ENCODE measurements at regions of chr15 and their contacts with region 1.

Region 1: DNA sequence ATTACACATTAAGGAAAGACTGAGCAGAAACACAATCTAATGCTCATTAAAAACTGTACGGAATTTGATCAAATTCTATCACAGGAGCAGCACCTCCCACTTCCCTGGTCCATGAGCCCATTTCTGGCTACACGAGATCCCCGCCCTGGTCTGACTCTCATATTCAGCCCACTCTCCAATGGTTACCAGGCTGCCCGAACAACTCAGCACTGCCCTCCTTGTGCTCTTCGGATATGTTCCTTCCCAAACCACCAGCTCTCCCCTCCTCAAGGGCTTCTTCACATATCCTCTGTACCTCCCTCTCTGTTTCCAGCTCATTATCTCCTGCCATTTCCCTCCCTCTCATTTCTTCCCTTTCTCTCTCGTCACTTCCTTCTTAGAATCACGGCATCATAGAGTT is 180.5 kb downstream of the RSL24D1 start:
- DNase-seq: no peak
- ATAC-seq: no peak
- H3K4me3 ChIP-seq: no peak overlapping the region
- H3K27ac ChIP-seq: no peak overlapping the region
- H3K4me1 ChIP-seq: no peaks in the 10 kb centered on the region
- H3K27me3 ChIP-seq: no peaks in the 10 kb centered on the region
- CTCF ChIP-seq: no peak
- POLR2A ChIP-seq: no peak

Region 2: DNA sequence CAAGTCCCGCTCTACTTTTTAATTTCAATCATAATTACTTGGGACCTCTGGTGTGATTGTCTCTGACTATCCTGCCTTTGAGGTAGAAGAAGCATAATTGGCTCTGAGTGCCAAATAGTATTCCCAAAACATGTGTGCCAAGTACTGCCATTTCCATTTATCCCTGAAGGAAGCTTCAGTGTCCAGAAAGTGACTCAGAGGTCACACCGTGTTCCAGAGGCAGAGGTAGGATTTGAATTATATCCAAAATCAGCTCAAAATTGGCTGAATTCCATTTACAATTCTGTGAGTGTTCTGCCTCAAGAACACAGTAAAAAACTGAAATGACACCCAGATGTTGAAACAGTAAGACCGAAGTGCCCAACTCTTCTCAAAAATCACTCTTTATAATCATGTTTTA is 74.8 kb before region 1 on chr15:
- intact Hi-C with region 1: no loop called
- DNase-seq: no peak
- ATAC-seq: no peak
- H3K4me3 ChIP-seq: no peak overlapping the region
- H3K27ac ChIP-seq: no peak overlapping the region
- H3K4me1 ChIP-seq: no peaks in the 10 kb centered on the region
- H3K27me3 ChIP-seq: no peaks in the 10 kb centered on the region
- CTCF ChIP-seq: no peak
- POLR2A ChIP-seq: no peak

Region 3: GRCh38 chr15:54960266-54960665 is 56.0 kb before region 1 on chr15:
- intact Hi-C with region 1: loop called (anchors 10 kb)
- DNase-seq: no peak
- ATAC-seq: no peak
- H3K4me3 ChIP-seq: no peak overlapping the region
- H3K27ac ChIP-seq: no peak overlapping the region
- H3K4me1 ChIP-seq: no peaks in the 10 kb centered on the region
- H3K27me3 ChIP-seq: no peaks in the 10 kb centered on the region
- CTCF ChIP-seq: no peak
- POLR2A ChIP-seq: no peak

Region 4: DNA sequence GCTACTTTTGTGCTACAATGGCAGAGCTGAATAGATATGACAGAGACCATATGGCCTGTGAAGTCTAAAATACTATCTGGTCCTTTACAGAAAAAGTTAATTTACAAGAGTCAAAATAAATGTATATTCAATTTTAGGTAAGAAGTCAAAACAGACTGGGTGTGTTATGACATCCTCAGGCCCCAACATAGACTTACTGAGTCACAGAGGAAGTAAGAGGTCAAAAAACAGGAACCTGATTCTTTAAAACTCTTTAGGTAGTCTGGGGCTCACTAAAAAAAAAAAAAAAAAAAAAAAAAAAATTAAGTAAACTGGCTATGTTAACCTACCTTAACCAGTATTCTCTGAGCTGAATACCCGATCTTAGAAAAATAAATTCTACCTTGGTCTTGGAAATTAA is 478.7 kb after region 1 on chr15:
- intact Hi-C with region 1: no loop called
- DNase-seq: peak in 1 of 4 donors; percentile 4
- ATAC-seq: no peak
- H3K4me3 ChIP-seq: no peak overlapping the region
- H3K27ac ChIP-seq: no peak overlapping the region
- H3K4me1 ChIP-seq: peaks cover 14% of the 10 kb centered on the region
- H3K27me3 ChIP-seq: no peaks in the 10 kb centered on the region
- CTCF ChIP-seq: no peak
- POLR2A ChIP-seq: no peak

Measured in body of pancreas (tissue), 4 donors.